Sigmoid colon (tissue), 7 donors: ENCODE measurements at regions of chr5 and their contacts with region 1.

Region 1: DNA sequence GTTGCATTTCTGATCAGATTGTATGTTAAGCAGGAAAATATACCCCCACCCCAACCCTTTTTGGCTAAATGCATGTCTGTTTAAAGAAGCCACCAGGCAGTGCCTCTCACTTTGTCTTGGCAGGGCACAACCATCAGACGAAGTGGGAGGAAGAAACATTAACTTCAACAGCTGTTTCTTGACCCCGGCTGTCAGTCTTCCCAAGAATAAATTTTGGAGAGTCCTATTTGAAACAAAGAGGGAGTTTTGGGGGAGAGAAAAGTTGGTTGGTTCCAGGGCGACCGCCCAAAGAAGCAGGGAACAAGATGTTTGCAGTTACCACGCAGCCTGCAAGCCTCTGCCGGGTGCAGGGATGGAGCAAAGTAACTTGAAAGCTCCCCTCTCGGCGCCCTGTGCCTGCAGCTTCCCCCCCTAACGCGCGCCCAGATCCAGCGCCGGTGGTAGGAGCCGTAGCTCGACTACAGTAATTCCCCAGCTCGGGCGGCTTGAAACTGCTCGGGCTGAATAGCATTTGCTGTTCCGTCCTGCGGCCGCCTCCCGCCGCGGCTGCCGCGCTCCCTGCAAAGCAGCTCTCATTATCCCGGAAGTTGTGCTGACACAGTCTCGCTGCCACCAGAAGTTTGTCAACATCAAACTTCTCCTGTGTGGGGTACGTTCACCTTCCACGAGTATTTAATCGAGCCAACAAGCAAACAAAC is 100.7 kb upstream of the SSBP2 start:
- DNase-seq: peak; percentile 98
- H3K4me3 ChIP-seq: peak overlapping the region; percentile 50 to 58 (median 53)
- H3K27ac ChIP-seq: peak overlapping the region; percentile 85 to 90 (median 88)
- H3K4me1 ChIP-seq: peaks cover 0 to 67% (median 43%) of the 10 kb centered on the region in 4 donors
- H3K27me3 ChIP-seq: no peaks in the 10 kb centered on the region
- CTCF ChIP-seq: no peak
- EP300 ChIP-seq: peak; percentile 8 to 82 (median 68)
- POLR2A ChIP-seq: peak in 1 of 2 donors; percentile 15

Region 2: DNA sequence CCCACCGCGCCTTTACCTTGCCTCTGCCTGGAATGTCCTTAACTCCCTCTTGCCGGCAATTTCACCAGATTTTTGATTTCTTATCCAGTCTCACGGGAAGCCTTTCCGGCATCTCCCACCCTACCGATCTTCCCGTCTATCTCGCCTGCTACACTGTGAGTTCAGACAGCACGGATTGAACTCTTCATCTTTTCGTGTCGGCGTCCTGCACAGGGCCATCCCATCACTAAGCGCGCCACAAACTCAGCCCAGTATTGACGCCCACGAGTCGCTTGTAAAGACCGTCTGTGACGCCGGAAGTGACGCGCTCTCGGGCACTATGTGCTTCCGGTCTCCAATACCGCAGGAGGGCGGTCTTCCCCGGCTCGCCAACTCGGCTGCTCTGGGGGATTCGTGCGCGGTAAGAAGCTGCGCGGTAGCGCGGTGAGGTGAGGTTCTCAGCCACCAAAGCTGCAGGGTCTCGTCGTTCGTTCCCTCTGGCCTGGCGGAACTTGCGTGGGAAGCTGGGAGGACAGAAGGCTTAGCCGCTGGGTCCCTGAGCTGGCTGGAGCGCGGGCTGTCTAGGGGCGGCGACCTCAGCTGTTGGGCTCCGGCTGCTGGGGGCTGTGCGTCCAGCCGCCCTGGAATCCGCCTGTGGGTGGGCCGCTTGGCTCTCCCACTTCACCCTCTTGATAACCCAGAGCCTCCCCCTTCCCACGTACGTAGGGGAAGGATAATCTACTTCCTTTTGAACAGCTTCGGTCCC is 550.2 kb before region 1 on chr5 and contains the start of gene ZCCHC9:
- intact Hi-C with region 1: loop called (anchors 5 kb)
- DNase-seq: peak; percentile 97
- H3K4me3 ChIP-seq: peak within 1 kb of the TSS; percentile 60 to 89 (median 76)
- H3K27ac ChIP-seq: peak within 1 kb of the TSS; percentile 85 to 92 (median 90)
- H3K4me1 ChIP-seq: peaks cover 0 to 46% (median 31%) of the 10 kb centered on the region in 4 donors
- H3K27me3 ChIP-seq: no peaks in the 10 kb centered on the region
- CTCF ChIP-seq: no peak
- EP300 ChIP-seq: no peak
- POLR2A ChIP-seq: peak; percentile 71 to 83
- total RNA-seq, gene ZCCHC9: 20.2 to 44.9 (median 29.6) TPM

Region 3: DNA sequence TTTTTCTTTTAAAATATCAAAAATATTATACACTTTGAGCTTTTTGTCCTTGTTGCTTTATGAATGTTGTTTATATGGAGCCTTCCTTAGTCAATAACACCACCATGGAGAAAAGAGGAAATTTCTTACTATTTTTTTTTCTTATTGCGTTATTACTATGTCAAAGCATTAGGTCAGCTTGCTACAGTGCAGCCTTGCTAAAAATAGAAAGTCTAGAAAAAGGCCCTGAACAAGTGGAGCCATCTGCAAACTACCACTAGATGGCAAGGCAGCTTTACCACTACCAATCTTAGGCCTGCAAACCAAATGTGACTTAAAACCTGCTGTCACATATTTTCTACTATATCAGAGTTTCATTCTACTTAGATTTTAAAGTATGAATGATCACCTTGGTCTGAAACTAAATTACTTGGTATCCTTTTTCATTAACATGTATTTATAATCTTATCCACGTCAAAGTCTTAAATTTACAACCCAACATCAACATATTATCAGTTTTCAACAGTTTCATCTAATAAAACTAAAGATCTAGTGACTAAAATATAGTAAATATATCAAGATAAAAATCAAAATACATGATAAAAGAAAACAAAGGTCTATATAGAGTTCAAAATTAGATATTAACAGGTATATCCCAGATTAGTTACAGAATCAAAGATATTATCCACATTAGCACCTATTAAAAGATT is 344.6 kb before region 1 on chr5:
- intact Hi-C with region 1: loop called (anchors 2 kb)
- DNase-seq: peak; percentile 76
- H3K4me3 ChIP-seq: no peak overlapping the region
- H3K27ac ChIP-seq: peak overlapping the region in 2 of 4 donors; percentile 20 to 63
- H3K4me1 ChIP-seq: peaks cover 0 to 22% (median 3%) of the 10 kb centered on the region in 4 donors
- H3K27me3 ChIP-seq: no peaks in the 10 kb centered on the region
- CTCF ChIP-seq: peak; percentile 71 to 87 (median 78)
- EP300 ChIP-seq: no peak
- POLR2A ChIP-seq: no peak

Region 4: DNA sequence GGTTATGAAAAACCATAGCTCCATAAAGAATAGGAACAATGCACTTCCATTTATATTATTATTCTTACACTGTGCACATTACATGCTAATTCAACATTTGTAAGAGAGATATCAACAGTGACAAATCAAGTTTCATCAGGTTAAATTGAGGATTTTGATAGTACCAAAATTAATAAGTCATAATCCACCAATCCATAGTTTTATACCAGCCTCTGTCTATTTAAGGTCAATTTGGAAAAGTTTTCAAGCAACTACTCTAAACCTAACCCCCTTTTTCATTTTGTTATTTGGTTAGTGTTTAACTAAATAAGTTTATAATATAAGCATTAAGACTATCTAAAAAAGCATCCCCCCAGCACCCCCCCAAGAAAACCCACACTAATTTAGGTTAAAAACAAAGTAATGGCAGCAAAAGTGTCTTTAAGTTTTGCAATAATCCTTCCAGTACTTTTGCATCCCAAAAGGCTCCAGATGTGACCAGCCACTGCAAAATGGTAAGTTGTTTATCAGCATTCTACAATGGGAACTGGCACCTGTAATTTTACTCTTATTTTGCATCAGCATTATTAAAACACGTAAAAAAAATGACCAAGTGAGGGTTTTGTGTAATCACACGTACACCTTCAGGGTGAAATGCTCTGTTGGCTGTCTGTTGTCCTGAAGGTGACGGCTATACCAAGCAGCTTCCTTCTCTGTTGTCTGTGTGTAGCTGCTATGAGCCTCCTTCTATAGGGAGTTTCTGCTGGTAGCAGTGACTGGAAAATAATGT is 64.0 kb before region 1 on chr5:
- intact Hi-C with region 1: loop called (anchors 1 kb)
- DNase-seq: peak; percentile 89
- H3K4me3 ChIP-seq: peak overlapping the region in 2 of 4 donors; percentile 0 to 10
- H3K27ac ChIP-seq: peak overlapping the region; percentile 15 to 65 (median 62)
- H3K4me1 ChIP-seq: peaks cover 0 to 37% (median 30%) of the 10 kb centered on the region in 4 donors
- H3K27me3 ChIP-seq: no peaks in the 10 kb centered on the region
- CTCF ChIP-seq: no peak
- EP300 ChIP-seq: no peak
- POLR2A ChIP-seq: no peak

Region 5: GRCh38 chr5:81825237-81825636 is 26.4 kb before region 1 on chr5:
- intact Hi-C with region 1: no loop called
- DNase-seq: peak; percentile 78
- H3K4me3 ChIP-seq: no peak overlapping the region
- H3K27ac ChIP-seq: peak overlapping the region in 3 of 4 donors; percentile 45 to 53 (median 53)
- H3K4me1 ChIP-seq: peaks cover 0 to 15% (median 9%) of the 10 kb centered on the region in 4 donors
- H3K27me3 ChIP-seq: no peaks in the 10 kb centered on the region
- CTCF ChIP-seq: no peak
- EP300 ChIP-seq: no peak
- POLR2A ChIP-seq: no peak

Region 6: GRCh38 chr5:82165740-82166530 is 314.3 kb after region 1 on chr5:
- intact Hi-C with region 1: loop called (anchors 2 kb)
- DNase-seq: peak; percentile 93
- H3K4me3 ChIP-seq: no peak overlapping the region
- H3K27ac ChIP-seq: peak overlapping the region; percentile 60 to 66 (median 63)
- H3K4me1 ChIP-seq: peaks cover 0 to 32% (median 18%) of the 10 kb centered on the region in 4 donors
- H3K27me3 ChIP-seq: no peaks in the 10 kb centered on the region
- CTCF ChIP-seq: peak; percentile 69 to 82 (median 73)
- EP300 ChIP-seq: no peak
- POLR2A ChIP-seq: no peak

Region 7: GRCh38 chr5:82197550-82197949 is 345.9 kb after region 1 on chr5:
- intact Hi-C with region 1: no loop called
- DNase-seq: no peak
- H3K4me3 ChIP-seq: no peak overlapping the region
- H3K27ac ChIP-seq: no peak overlapping the region
- H3K4me1 ChIP-seq: no peaks in the 10 kb centered on the region
- H3K27me3 ChIP-seq: no peaks in the 10 kb centered on the region
- CTCF ChIP-seq: no peak
- EP300 ChIP-seq: no peak
- POLR2A ChIP-seq: no peak